Sigmoid colon (tissue), 7 donors: ENCODE measurements at regions of chr6 and their contacts with region 1.

Region 1: GRCh38 chr6:36851149-36851614 is 11.9 kb upstream of the CPNE5 start:
- DNase-seq: peak; percentile 87
- H3K4me3 ChIP-seq: no peak overlapping the region
- H3K27ac ChIP-seq: peak overlapping the region in 2 of 4 donors; percentile 53 to 70
- H3K4me1 ChIP-seq: peaks cover 0 to 34% (median 13%) of the 10 kb centered on the region in 4 donors
- H3K27me3 ChIP-seq: no peaks in the 10 kb centered on the region
- CTCF ChIP-seq: peak; percentile 21 to 61 (median 44)
- EP300 ChIP-seq: no peak
- POLR2A ChIP-seq: no peak

Region 2: DNA sequence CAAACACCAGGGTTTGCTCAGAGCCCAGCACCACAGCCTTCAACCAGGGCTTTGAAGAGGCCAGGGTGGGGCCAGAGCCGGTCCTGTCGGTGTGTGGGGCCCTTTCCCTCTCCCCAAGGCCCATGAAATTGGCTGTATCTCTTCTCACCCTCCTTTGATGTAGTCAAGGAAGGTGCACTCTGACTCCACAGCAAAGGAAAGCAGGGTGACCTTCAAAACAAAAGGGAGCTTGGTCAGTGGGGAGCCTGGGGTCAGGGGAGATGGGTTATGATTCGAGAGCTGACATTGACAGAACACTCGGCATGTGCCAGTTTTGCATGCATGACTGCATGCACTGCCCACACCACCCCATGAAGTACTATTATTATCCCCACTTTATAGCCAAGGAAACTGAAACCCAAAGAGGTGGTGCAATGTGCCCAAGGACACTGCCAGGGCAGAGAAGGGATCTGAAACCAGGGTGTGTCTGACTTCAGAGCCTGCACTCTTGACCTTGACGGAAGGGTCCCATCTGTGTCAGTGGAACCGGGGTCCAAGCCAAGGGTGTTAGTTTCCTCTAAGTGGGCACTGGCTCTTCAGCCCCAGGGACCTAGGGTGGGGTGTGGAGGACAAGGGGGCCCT is 98.2 kb before region 1 on chr6:
- intact Hi-C with region 1: no loop called
- DNase-seq: no peak
- H3K4me3 ChIP-seq: no peak overlapping the region
- H3K27ac ChIP-seq: no peak overlapping the region
- H3K4me1 ChIP-seq: no peaks in the 10 kb centered on the region
- H3K27me3 ChIP-seq: no peaks in the 10 kb centered on the region
- CTCF ChIP-seq: no peak
- EP300 ChIP-seq: no peak
- POLR2A ChIP-seq: no peak

Region 3: GRCh38 chr6:36765594-36766398 is 85.4 kb before region 1 on chr6:
- intact Hi-C with region 1: loop called (anchors 1 kb)
- DNase-seq: peak; percentile 89
- H3K4me3 ChIP-seq: no peak overlapping the region
- H3K27ac ChIP-seq: no peak overlapping the region
- H3K4me1 ChIP-seq: peaks cover 0 to 28% (median 20%) of the 10 kb centered on the region in 4 donors
- H3K27me3 ChIP-seq: no peaks in the 10 kb centered on the region
- CTCF ChIP-seq: peak; percentile 70 to 83 (median 80)
- EP300 ChIP-seq: no peak
- POLR2A ChIP-seq: no peak

Region 4: GRCh38 chr6:37204014-37204751 is 353.0 kb after region 1 on chr6:
- intact Hi-C with region 1: no loop called
- DNase-seq: no peak
- H3K4me3 ChIP-seq: no peak overlapping the region
- H3K27ac ChIP-seq: no peak overlapping the region
- H3K4me1 ChIP-seq: no peaks in the 10 kb centered on the region
- H3K27me3 ChIP-seq: no peaks in the 10 kb centered on the region
- CTCF ChIP-seq: no peak
- EP300 ChIP-seq: no peak
- POLR2A ChIP-seq: no peak